CD8-positive, alpha-beta T cell (primary cell): ENCODE measurements at regions of chr20 and their contacts with region 1.

Region 1: GRCh38 chr20:63520504-63520933 is at the start of gene PPDPF:
- DNase-seq: peak; percentile 74 to 94 (median 85)
- ATAC-seq: peak; percentile 89
- H3K4me3 ChIP-seq: peak within 1 kb of the TSS; percentile 67 to 76
- H3K4me3 Mint-ChIP-seq: peak within 1 kb of the TSS; percentile 85
- H3K27ac ChIP-seq: peak within 1 kb of the TSS; percentile 54 to 85
- H3K27ac Mint-ChIP-seq: peak within 1 kb of the TSS; percentile 87
- H3K4me1 ChIP-seq: peaks cover 21% of the 10 kb centered on the region
- H3K4me1 Mint-ChIP-seq: peaks cover 14% of the 10 kb centered on the region
- H3K27me3 ChIP-seq: no peaks in the 10 kb centered on the region
- H3K27me3 Mint-ChIP-seq: no peaks in the 10 kb centered on the region
- CTCF ChIP-seq: no peak
- total RNA-seq, gene PPDPF: 284 to 287 TPM

Region 2: GRCh38 chr20:62237801-62238571 is 1282.5 kb before region 1 on chr20 and contains the start of gene OSBPL2:
- CTCF ChIA-PET with region 1: no interaction called
- POLR2A ChIA-PET with region 1: no interaction called
- intact Hi-C with region 1: loop called in 1 of 2 experiments (anchors 5 kb)
- DNase-seq: peak; percentile 100
- ATAC-seq: peak; percentile 98
- H3K4me3 ChIP-seq: peak within 1 kb of the TSS; percentile 54 to 58
- H3K4me3 Mint-ChIP-seq: peak within 1 kb of the TSS; percentile 84
- H3K27ac ChIP-seq: peak within 1 kb of the TSS; percentile 65 to 70
- H3K27ac Mint-ChIP-seq: peak within 1 kb of the TSS; percentile 95
- H3K4me1 ChIP-seq: peaks cover 24% of the 10 kb centered on the region
- H3K4me1 Mint-ChIP-seq: peaks cover 41% of the 10 kb centered on the region
- H3K27me3 ChIP-seq: no peaks in the 10 kb centered on the region
- H3K27me3 Mint-ChIP-seq: peaks cover 9% of the 10 kb centered on the region
- CTCF ChIP-seq: no peak
- total RNA-seq, gene OSBPL2: 63.6 to 64.2 TPM

Region 3: DNA sequence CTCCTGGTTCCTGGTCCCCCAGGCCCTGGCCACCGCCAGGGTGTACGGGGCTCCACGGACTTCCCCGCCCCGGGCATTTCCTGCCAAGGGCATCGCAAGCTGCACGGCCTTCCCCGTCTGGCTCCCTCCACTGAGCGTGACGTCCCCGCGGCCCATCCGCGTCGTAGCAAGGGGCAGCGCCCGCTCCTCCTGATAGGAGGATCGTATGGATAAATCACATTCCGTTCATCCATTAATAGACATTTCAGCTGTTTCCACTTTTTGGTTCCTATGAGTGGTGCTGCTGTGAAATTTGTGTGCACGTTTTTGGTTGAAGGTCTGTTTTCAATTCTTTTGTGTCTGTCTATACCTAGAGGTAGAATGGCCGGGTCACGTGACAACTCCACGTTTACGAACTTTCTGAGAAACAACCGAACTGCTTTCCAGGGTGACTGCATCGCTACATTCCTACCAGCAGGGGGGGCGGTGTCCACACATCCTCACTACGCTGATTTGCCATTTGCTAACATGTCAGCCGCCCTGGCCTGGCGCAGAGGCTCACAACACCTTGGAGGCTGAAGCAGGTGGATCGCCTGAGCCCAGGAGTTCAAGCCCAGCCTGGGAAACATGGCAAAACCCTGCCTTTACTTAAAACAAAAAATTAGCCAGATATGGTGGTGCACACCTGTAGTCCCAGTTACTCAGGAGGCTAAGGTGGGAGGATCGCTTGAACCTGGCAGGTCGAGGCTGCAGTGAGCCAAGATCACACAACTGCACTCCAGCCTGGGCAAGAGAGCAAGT is 85.7 kb before region 1 on chr20:
- CTCF ChIA-PET with region 1: no interaction called
- POLR2A ChIA-PET with region 1: no interaction called
- intact Hi-C with region 1: loop called in 1 of 2 experiments (anchors 10 kb)
- DNase-seq: peak; percentile 55 to 88 (median 76)
- ATAC-seq: peak; percentile 85
- H3K4me3 ChIP-seq: peak overlapping the region in 1 of 2 experiments; percentile 6
- H3K4me3 Mint-ChIP-seq: peak overlapping the region; percentile 44
- H3K27ac ChIP-seq: peak overlapping the region; percentile 11 to 21
- H3K27ac Mint-ChIP-seq: peak overlapping the region; percentile 79
- H3K4me1 ChIP-seq: peaks cover 8% of the 10 kb centered on the region
- H3K4me1 Mint-ChIP-seq: peaks cover 12% of the 10 kb centered on the region
- H3K27me3 ChIP-seq: no peaks in the 10 kb centered on the region
- H3K27me3 Mint-ChIP-seq: peaks cover 2% of the 10 kb centered on the region
- CTCF ChIP-seq: peak; percentile 92

Region 4: DNA sequence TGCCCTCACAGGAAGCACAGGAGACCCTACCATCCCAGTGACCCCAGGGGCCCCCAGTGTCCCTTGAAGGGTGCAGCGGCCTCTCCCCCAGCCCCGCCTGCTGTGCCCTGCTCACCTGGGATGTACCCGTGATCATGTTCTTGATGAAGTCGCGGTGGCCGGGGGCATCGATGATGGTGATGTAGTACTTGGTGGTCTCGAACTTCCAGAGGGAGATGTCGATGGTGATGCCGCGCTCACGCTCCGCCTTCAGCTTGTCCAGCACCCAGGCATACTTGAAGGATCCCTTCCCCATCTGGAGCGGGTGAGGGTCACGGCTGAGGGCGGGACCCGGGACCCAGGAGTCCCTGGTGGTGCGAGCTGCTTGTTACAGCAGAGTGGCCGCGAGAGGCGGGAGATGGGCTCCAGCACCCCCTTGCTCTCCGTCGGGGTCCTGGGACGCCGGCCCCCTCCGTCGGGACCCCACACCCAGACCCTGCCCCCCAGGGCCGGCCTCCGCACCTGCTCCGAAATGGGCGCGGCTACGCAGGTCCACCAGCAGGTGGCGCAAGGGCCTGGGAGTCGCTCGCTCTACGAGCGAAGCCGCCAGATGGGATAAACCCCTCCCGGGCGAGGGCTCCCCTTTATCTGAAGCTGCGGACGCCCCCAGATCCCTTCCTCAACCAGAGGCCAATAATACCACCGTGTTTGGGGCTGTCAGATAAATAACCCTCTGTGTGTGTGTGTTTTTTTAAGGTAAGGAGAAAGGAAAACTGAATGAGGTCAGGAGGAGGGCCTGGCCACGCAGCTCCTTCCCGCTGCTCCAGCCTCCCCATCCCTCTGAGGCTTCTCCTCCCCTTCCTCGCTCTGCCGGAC is 24.6 kb before region 1 on chr20:
- CTCF ChIA-PET with region 1: interaction called, 35 read pairs
- POLR2A ChIA-PET with region 1: interaction called, 15 read pairs
- intact Hi-C with region 1: loop called (anchors 1 kb)
- DNase-seq: peak; percentile 48 to 86 (median 78)
- ATAC-seq: peak; percentile 74
- H3K4me3 ChIP-seq: peak overlapping the region; percentile 15 to 18
- H3K4me3 Mint-ChIP-seq: peak overlapping the region; percentile 39
- H3K27ac ChIP-seq: no peak overlapping the region
- H3K27ac Mint-ChIP-seq: no peak overlapping the region
- H3K4me1 ChIP-seq: peaks cover 16% of the 10 kb centered on the region
- H3K4me1 Mint-ChIP-seq: peaks cover 5% of the 10 kb centered on the region
- H3K27me3 ChIP-seq: peaks cover 9 to 33% of the 10 kb centered on the region in 2 experiments
- H3K27me3 Mint-ChIP-seq: peaks cover 10% of the 10 kb centered on the region
- CTCF ChIP-seq: peak; percentile 95

Region 5: GRCh38 chr20:63553227-63553932 is 32.9 kb after region 1 on chr20:
- CTCF ChIA-PET with region 1: no interaction called
- POLR2A ChIA-PET with region 1: interaction called, 4 read pairs
- intact Hi-C with region 1: loop called (anchors 1 kb)
- DNase-seq: peak; percentile 76 to 93 (median 87)
- ATAC-seq: peak; percentile 81
- H3K4me3 ChIP-seq: peak overlapping the region; percentile 51 to 55
- H3K4me3 Mint-ChIP-seq: peak overlapping the region; percentile 70
- H3K27ac ChIP-seq: peak overlapping the region; percentile 17 to 61
- H3K27ac Mint-ChIP-seq: peak overlapping the region; percentile 89
- H3K4me1 ChIP-seq: peaks cover 19% of the 10 kb centered on the region
- H3K4me1 Mint-ChIP-seq: peaks cover 20% of the 10 kb centered on the region
- H3K27me3 ChIP-seq: peaks cover 0 to 2% of the 10 kb centered on the region in 2 experiments
- H3K27me3 Mint-ChIP-seq: peaks cover 4% of the 10 kb centered on the region
- CTCF ChIP-seq: no peak